Aorta (tissue), 5 donors: ENCODE measurements at regions of chr3 and their contacts with region 1.

Region 1: GRCh38 chr3:158644345-158644908 is at the start of gene GFM1:
- DNase-seq: peak; percentile 95 to 96
- ATAC-seq: peak; percentile 97
- H3K4me3 ChIP-seq: peak within 1 kb of the TSS; percentile 72 to 98
- H3K27ac ChIP-seq: peak within 1 kb of the TSS; percentile 31 to 60
- H3K4me1 ChIP-seq: peaks cover 0 to 2% of the 10 kb centered on the region in 2 donors
- H3K27me3 ChIP-seq: no peaks in the 10 kb centered on the region
- total RNA-seq, gene GFM1: 39.3 to 42.3 TPM

Region 2: DNA sequence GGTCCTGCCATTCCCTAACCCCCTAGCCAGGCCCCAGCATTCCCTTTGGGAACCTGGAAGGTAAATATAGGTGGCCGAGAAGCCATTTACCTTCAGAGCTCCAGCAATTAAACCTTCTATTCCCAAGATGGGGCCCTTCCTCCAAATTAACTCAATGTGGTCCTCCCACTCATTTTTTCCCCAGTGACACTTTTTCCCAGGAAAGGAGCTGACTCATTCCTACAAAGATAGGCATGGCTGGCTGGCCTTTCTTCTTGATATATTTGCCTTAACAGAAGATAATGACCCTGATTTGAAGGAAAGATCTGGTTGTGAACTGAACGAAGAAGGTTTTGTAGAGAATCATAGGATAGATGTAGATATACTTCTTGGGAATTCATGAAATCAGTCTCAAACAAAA is 862.2 kb before region 1 on chr3:
- intact Hi-C with region 1: no loop called
- DNase-seq: no peak
- ATAC-seq: no peak
- H3K4me3 ChIP-seq: no peak overlapping the region
- H3K27ac ChIP-seq: no peak overlapping the region
- H3K4me1 ChIP-seq: peaks cover 4 to 10% of the 10 kb centered on the region in 2 donors
- H3K27me3 ChIP-seq: no peaks in the 10 kb centered on the region

Region 3: DNA sequence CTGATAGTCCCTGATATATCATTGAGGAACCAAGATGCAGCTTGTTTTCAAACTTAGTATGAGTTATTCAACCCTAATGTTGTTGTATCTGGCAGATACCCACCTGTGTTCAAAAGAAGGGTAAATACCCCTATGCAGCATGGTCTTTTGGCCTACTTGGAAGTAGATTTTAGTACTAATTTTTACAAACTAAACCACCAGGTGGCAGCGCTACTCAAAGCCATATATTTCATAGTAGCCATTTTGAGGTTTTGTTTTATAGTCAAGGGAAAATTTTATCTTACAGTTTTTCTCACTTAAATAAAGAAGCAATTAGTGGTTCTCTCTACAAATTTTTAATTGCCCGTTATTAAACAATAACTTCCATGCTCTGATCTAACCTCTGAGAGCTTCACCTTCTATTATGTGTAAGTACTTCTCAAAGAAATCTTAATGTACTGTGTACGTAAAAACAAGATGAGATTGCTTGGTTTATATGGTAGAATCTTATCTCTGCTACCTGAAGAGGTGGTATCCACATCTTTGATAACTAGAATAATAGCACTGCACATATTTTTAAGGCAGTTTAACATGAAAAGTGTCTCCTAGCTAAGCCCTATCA is 104.9 kb before region 1 on chr3:
- intact Hi-C with region 1: loop called in 1 of 2 experiments (anchors 5 kb)
- DNase-seq: peak in 1 of 2 donors; percentile 42
- ATAC-seq: no peak
- H3K4me3 ChIP-seq: no peak overlapping the region
- H3K27ac ChIP-seq: no peak overlapping the region
- H3K4me1 ChIP-seq: no peaks in the 10 kb centered on the region
- H3K27me3 ChIP-seq: no peaks in the 10 kb centered on the region

Region 4: GRCh38 chr3:158672293-158673176 is 28.1 kb after region 1 on chr3 and contains the start of gene LXN:
- intact Hi-C with region 1: no loop called
- DNase-seq: peak; percentile 89 to 91
- ATAC-seq: peak; percentile 96
- H3K4me3 ChIP-seq: no peak within 1 kb of the TSS
- H3K27ac ChIP-seq: no peak within 1 kb of the TSS
- H3K4me1 ChIP-seq: no peaks in the 10 kb centered on the region
- H3K27me3 ChIP-seq: no peaks in the 10 kb centered on the region
- total RNA-seq, gene LXN: 37.8 to 78.1 TPM